Endothelial cell of umbilical vein (primary cell): ENCODE measurements at regions of chr18 and their contacts with region 1.

Region 1: DNA sequence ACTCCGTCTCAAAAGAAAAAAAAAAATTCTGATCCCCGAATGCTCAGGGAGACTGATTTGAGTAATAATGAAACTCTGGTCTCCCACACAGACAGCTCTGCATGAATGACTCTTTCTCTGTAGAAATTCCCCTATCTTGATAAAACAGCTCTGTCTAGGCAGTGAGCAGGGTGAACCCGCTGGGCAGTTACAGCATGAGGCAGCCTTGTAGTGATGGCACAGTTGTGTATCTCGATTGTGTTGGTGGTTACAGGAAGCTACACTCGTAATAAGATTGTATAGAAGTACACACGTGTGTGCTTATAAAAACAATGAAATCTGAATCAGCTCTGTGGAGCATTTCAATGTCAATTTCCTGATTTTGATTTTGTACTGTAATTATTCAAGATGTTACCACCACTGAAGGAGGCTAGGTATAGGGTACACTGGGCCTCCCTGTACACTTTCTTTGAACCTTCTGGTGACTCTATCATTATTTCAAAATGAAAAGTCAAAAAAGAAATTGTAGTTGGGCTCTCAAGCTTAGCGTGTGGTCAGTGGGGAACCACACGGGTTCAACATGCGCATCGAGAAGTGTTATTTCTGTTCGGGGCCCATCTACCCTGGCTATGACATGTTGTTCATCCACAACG is 34.9 kb upstream of the ATP8B1 start:
- DNase-seq: peak; percentile 91
- H3K4me3 ChIP-seq: no peak overlapping the region
- H3K27ac ChIP-seq: peak overlapping the region; percentile 74
- H3K4me1 ChIP-seq: peaks cover 33% of the 10 kb centered on the region
- H3K27me3 ChIP-seq: no peaks in the 10 kb centered on the region
- CTCF ChIP-seq: no peak
- POLR2A ChIP-seq: no peak

Region 2: DNA sequence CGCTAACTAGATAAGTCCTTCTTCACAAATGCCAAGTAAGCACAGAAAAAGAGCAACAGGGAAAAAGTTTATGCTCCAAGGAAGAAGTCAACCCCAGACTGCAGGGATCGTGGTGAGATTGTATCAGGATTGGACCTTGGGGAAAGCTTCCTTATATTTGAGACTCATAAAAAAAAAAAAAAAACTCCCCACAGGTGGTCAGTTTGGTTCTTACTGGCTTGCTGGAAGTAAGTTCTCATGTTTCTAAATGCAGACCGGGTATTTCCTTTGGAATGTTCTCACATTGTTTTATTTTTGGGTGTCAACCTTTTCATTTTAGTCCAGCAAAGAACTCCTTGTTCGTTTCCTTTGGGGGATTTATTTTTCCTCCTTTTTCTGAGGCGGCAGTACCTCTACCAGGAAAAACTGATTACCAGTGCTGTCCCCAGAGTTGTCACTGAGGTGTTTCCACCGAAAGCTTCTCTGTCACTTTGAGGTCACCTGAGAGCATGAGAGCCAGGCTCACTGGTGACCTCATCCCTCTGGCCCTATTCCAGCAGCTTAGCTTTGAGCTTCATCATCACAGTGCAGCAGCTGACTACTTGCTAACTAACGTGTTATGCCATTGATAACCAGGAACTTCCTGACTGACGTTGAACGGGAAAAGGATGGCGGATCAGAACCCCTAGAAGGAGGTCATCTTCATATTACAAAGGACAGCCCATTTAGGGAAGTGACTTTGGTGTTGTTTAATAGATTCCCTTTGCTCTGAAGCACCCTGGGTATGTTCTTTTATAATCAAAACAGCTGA is 18.2 kb before region 1 on chr18:
- CTCF ChIA-PET with region 1: interaction called, 4 read pairs
- POLR2A ChIA-PET with region 1: interaction called, 5 read pairs
- dilution Hi-C with region 1: no loop called
- intact Hi-C with region 1: loop called (anchors 1 kb)
- DNase-seq: peak; percentile 99
- H3K4me3 ChIP-seq: no peak overlapping the region
- H3K27ac ChIP-seq: peak overlapping the region; percentile 96
- H3K4me1 ChIP-seq: peaks cover 18% of the 10 kb centered on the region
- H3K27me3 ChIP-seq: no peaks in the 10 kb centered on the region
- CTCF ChIP-seq: no peak
- POLR2A ChIP-seq: peak; percentile 43

Region 3: DNA sequence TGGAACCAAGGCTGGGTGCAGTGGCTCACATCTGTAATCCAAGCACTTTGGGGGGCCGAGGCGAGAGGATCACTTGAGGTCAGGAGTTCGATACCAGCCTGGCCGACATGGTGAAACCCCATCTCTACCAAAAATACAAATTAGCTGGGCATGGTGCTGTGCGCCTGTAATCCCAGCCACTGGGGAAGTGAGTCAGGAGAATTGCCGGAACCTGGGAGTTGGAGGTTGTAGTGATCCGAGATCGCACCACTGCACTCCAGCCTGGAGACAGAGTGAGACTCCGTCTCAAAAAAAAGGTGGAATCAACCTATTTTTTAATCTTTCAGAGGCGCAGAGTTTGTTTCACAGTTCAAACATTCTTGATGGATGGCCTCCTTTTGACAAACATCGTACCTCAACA is 10.4 kb before region 1 on chr18:
- CTCF ChIA-PET with region 1: interaction called, 10 read pairs
- POLR2A ChIA-PET with region 1: interaction called, 3 read pairs
- dilution Hi-C with region 1: no loop called
- intact Hi-C with region 1: no loop called
- DNase-seq: no peak
- H3K4me3 ChIP-seq: no peak overlapping the region
- H3K27ac ChIP-seq: peak overlapping the region; percentile 57
- H3K4me1 ChIP-seq: peaks cover 5% of the 10 kb centered on the region
- H3K27me3 ChIP-seq: no peaks in the 10 kb centered on the region
- CTCF ChIP-seq: no peak
- POLR2A ChIP-seq: no peak